Activated T-helper 2 cell treated with anti-CD3 and anti-CD28 coated beads, Interferon-gamma antibody, Interleukin-2, Interleukin-4, amounts not matched to agents 10 μg/mL and 5 μg/mL and 100 μg/mL, durations not matched to agents 14 hours and 24 hours and 36 hours (primary cell): ENCODE measurements at regions of chr17 and their contacts with region 1.

Region 1: GRCh38 chr17:48194097-48194550 is 86.6 kb downstream of the SNX11 start:
- DNase-seq: no peak
- H3K4me3 Mint-ChIP-seq: peak overlapping the region; percentile 49
- H3K27ac Mint-ChIP-seq: peak overlapping the region; percentile 6
- H3K4me1 Mint-ChIP-seq: peaks cover 54% of the 10 kb centered on the region
- H3K27me3 Mint-ChIP-seq: no peaks in the 10 kb centered on the region

Region 2: GRCh38 chr17:47733047-47733673 is 461.0 kb before region 1 on chr17 and contains the start of gene TBX21:
- intact Hi-C with region 1: no loop called
- DNase-seq: peak; percentile 82
- H3K4me3 Mint-ChIP-seq: peak within 1 kb of the TSS; percentile 100
- H3K27ac Mint-ChIP-seq: peak within 1 kb of the TSS; percentile 91
- H3K4me1 Mint-ChIP-seq: peaks cover 62% of the 10 kb centered on the region
- H3K27me3 Mint-ChIP-seq: no peaks in the 10 kb centered on the region
- total RNA-seq, gene TBX21: 40.4 and 40.6 TPM in 2 replicates

Region 3: DNA sequence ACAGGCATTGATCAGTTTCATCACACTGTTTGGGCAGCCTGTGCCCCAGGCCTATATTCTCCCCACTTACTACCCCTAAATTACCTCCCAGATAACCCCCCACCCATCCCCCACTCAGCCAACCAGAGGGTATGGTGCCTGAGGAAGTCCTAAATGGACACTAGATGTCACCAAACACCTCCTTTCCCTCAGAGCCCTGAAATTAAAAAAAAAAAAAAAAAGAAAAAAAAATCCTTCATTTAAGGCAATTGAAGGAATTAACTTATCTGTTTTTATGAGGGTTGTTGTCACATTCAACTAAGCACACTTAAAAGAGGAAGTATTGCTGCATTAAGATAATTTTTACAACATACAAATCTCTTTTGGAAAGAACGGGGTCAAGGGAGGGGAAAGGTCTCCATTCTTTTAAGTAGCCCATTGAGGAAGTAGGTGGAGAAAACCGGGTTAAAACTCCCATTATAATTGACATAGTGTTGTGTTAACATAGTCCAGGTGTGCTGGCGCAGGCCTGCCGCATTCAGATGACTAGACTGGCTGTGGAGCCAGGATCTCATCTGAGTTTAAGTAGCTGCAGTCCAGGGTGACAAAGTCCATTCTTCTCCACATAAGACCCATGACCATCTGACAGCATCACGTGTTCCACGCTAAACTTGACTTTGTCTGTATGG is 40.3 kb before region 1 on chr17:
- intact Hi-C with region 1: no loop called
- DNase-seq: no peak
- H3K4me3 Mint-ChIP-seq: no peak overlapping the region
- H3K27ac Mint-ChIP-seq: no peak overlapping the region
- H3K4me1 Mint-ChIP-seq: no peaks in the 10 kb centered on the region
- H3K27me3 Mint-ChIP-seq: no peaks in the 10 kb centered on the region

Region 4: DNA sequence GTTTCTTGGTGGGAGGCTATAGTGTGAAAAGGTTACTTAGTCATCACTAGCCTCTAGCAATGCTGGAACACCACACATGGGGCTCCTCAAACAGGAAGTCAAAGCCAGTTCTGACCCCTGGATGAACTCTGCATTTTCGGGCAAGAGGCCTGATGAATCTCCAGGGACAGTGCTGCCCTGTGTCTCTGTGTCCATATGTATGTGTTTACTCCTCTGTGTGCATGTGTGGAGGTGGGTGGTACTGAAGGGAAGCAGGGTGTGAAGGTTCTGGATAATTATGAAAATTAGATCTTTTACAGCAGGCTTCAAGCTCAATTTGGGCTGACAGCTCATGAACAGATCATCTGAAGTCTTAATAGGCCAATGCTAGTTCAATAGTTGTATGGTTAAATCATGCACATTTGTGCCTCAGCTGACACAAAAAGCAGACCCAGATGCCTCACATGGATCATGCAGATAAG is 47.0 kb after region 1 on chr17:
- intact Hi-C with region 1: loop called (anchors 5 kb)
- DNase-seq: no peak
- H3K4me3 Mint-ChIP-seq: peak overlapping the region; percentile 27
- H3K27ac Mint-ChIP-seq: peak overlapping the region; percentile 76
- H3K4me1 Mint-ChIP-seq: peaks cover 67% of the 10 kb centered on the region
- H3K27me3 Mint-ChIP-seq: no peaks in the 10 kb centered on the region